ENCODE measurements at regions of chr15 and their contacts with region 1.

Region 1: DNA sequence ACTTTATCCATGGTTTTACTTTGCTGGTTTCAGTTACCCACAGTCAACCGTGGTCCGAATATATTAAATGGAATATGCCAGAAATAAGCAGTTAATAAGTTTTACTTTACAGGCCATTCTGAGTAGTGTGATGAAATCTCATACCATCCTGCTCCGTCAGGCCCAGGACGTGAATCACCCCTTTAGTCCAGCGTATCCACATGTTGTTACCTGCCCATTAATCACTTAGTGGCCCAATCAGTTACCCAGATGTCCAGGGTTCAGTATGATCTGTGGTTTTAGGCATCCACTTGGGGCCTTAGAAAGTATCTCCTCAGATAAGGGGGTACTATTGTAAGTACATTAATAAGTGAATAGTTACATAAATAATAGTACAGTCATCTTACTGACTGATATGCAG is 88.0 kb downstream of the TTBK2 start:
- DNase-seq: peak; percentile 83
- ATAC-seq: peak; percentile 100
- H3K4me3 ChIP-seq: no peak overlapping the region
- H3K27ac ChIP-seq: 0 out of 2 replicates have a peak overlapping the region, but pooled peaks have one; percentile 2
- H3K4me1 ChIP-seq: peaks cover 9% of the 10 kb centered on the region
- H3K27me3 ChIP-seq: no peaks in the 10 kb centered on the region
- CTCF ChIP-seq: no peak

Region 2: GRCh38 chr15:42845581-42845980 is 13.0 kb after region 1 on chr15:
- CTCF ChIA-PET with region 1: no interaction called
- POLR2A ChIA-PET with region 1: interaction called, 13 read pairs
- intact Hi-C with region 1: no loop called
- DNase-seq: peak; percentile 87
- ATAC-seq: peak; percentile 100
- H3K4me3 ChIP-seq: no peak overlapping the region
- H3K27ac ChIP-seq: no peak overlapping the region
- H3K4me1 ChIP-seq: peaks cover 14% of the 10 kb centered on the region
- H3K27me3 ChIP-seq: no peaks in the 10 kb centered on the region
- CTCF ChIP-seq: no peak

Region 3: GRCh38 chr15:43299411-43299810 is 466.8 kb after region 1 on chr15:
- CTCF ChIA-PET with region 1: no interaction called
- POLR2A ChIA-PET with region 1: no interaction called
- intact Hi-C with region 1: no loop called
- DNase-seq: no peak
- ATAC-seq: no peak
- H3K4me3 ChIP-seq: no peak overlapping the region
- H3K27ac ChIP-seq: no peak overlapping the region
- H3K4me1 ChIP-seq: no peaks in the 10 kb centered on the region
- H3K27me3 ChIP-seq: peaks cover 13% of the 10 kb centered on the region; the same call in 1 of the 2 replicates
- CTCF ChIP-seq: no peak

Measured in PC-3 (cell line).